A549 (cell line): ENCODE measurements at regions of chr2 and their contacts with region 1.

Region 1: GRCh38 chr2:48471048-48471474 is 58.9 kb upstream of the STON1 start:
- DNase-seq: peak; percentile 35 to 79
- ATAC-seq: peak; percentile 97 to 98
- H3K4me3 ChIP-seq: no peak overlapping the region
- H3K27ac ChIP-seq: peak overlapping the region; percentile 15 to 69; a peak in 5 of 6 replicates
- H3K4me1 ChIP-seq: peaks cover 9% of the 10 kb centered on the region
- CTCF ChIP-seq: peak; percentile 95
- EP300 ChIP-seq: no peak
- POLR2A ChIP-seq: no peak
- RAD21 ChIP-seq: peak; percentile 68 to 76

Region 2: DNA sequence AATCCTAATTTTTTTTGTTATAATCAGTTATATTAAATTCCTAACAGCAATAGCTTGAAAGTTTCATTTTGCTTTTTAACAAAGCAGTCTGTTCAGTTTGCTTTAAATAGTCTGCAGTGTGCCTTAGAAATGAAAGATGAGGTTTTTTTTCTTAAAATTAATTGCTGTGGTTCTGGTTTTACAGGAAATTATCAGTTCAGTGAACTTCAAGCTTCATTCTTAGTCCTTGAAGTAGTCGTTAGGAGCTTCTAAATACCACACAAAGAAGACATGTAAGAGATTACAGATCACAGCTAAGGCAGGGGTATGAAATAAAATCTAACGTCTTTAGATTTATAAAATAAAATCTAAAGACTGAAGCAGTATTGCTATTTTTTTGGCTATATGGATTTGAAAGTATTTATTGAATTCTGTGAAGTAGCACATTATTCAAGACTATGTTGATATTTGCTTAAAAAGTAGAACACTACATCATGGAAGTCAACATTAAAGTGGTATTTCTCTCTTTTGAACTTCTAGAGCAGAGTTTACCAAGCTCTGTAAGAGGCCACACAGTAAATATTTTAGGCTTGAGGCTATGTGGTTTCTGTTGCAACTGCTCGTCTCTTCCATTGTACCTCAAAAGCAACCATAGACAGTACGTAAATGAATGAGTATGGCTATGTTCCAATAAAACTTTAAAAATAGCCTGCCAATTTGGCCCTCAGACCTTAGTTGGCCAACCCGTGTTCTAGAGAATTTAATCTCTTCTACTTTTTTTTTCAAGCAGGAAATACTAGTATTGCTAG is 22.6 kb before region 1 on chr2:
- CTCF ChIA-PET with region 1: interaction called, 17 read pairs
- POLR2A ChIA-PET with region 1: no interaction called
- DNase-seq: no peak
- ATAC-seq: no peak
- H3K4me3 ChIP-seq: no peak overlapping the region
- H3K27ac ChIP-seq: no peak overlapping the region
- H3K4me1 ChIP-seq: 0 out of 3 replicates have a peak, but pooled peaks cover 3% of the 10 kb centered on the region
- CTCF ChIP-seq: no peak
- EP300 ChIP-seq: no peak
- POLR2A ChIP-seq: no peak
- RAD21 ChIP-seq: no peak

Region 3: GRCh38 chr2:48482313-48482712 is 11.3 kb after region 1 on chr2:
- CTCF ChIA-PET with region 1: interaction called, 30 read pairs
- POLR2A ChIA-PET with region 1: no interaction called
- DNase-seq: no peak
- ATAC-seq: no peak; a peak in 1 of 6 replicates
- H3K4me3 ChIP-seq: no peak overlapping the region
- H3K27ac ChIP-seq: no peak overlapping the region
- H3K4me1 ChIP-seq: no peaks in the 10 kb centered on the region
- CTCF ChIP-seq: no peak
- EP300 ChIP-seq: no peak
- POLR2A ChIP-seq: no peak
- RAD21 ChIP-seq: no peak

Region 4: DNA sequence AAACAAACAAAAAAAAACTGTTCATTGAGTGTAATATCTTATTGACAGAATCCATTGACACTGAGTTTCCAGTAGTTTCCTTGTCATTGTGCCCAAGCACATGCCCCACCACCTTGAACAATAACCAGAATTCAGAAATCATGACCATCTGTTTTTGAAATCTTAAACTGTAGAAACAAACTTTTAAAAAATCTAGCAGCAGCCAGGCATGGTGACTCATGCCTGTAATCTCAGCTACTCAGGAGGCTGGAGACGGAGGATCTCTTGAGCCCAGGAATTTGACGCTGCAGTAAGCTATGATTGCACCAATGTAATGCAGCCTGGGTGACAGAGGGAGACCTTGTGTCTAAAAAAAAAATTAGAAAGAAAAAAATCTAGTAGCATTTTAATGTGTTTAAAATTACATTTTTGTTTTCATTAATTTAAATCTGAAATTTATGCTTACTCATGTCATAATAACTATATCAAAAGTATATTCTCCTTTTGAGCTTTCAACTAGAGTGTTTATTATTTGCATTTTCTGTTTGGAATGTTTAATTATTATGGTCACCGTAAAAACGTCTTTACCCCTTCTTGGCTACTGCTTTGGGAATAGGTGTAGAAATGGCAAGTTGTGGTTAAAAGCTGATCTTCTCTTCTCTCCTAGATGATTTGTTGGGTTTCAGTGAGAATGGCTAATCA is 33.7 kb after region 1 on chr2:
- CTCF ChIA-PET with region 1: interaction called, 12 read pairs
- POLR2A ChIA-PET with region 1: no interaction called
- DNase-seq: peak in 1 of 2 experiments; percentile 21
- ATAC-seq: 0 out of 6 replicates have a peak, but pooled peaks of 1 of the 2 experiments have one; percentile 42
- H3K4me3 ChIP-seq: no peak overlapping the region
- H3K27ac ChIP-seq: no peak overlapping the region
- H3K4me1 ChIP-seq: peaks cover 14% of the 10 kb centered on the region
- CTCF ChIP-seq: no peak
- EP300 ChIP-seq: no peak
- POLR2A ChIP-seq: no peak
- RAD21 ChIP-seq: no peak

Region 5: DNA sequence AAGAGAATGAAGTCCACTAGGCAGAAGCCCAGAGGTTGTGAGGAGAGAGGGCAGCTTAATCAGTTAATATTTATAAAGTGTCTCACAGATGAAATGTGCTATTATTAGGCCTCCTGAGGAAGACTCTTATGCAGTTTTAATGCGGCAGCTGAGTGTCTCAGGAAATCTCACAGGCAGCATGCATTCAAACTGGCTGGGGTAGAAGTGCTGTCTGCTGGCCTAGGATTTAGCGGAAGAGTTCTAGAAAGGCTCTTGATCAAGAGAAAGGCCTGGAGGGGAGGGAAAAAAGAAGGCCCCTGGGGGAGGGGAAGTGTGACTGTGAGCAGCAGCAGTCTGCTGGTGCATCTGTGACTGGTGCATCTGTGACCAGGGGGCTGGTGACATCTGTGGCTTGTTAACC is 550.2 kb after region 1 on chr2:
- CTCF ChIA-PET with region 1: no interaction called
- POLR2A ChIA-PET with region 1: no interaction called
- DNase-seq: no peak
- ATAC-seq: no peak
- H3K4me3 ChIP-seq: no peak overlapping the region
- H3K27ac ChIP-seq: no peak overlapping the region
- H3K4me1 ChIP-seq: no peaks in the 10 kb centered on the region
- CTCF ChIP-seq: no peak
- EP300 ChIP-seq: no peak
- POLR2A ChIP-seq: no peak
- RAD21 ChIP-seq: no peak